ENCODE measurements at regions of chr7 and their contacts with region 1.

Region 1: GRCh38 chr7:14691597-14692203 is 210.9 kb downstream of the DGKB start:
- DNase-seq: peak; percentile 30
- ATAC-seq: peak; percentile 53; the same call in 1 of the 2 replicates
- H3K4me3 ChIP-seq: no peak overlapping the region
- H3K27ac ChIP-seq: no peak overlapping the region
- H3K4me1 ChIP-seq: no peaks in the 10 kb centered on the region
- H3K27me3 ChIP-seq: no peaks in the 10 kb centered on the region
- CTCF ChIP-seq: peak; percentile 75
- POLR2A ChIP-seq: no peak
- RAD21 ChIP-seq: peak; percentile 66

Region 2: DNA sequence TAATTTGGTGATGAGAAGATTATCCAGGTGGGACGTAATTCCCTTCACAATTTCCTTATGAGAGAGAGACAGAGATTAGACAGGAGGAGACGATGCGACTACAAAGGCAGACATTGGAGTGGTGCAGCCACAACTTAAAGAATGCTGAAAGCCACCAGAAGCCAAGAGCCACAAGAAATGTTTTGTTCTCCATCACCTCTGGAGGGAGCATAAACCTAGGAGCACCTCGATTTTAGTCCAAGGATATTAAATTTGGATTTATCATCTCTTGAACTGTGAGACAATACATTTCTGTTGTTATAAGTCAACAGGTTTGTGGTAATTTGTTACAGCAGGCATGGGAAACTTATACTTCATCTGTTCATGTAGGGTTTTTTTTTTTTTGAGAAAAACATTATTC is 208.0 kb before region 1 on chr7:
- CTCF ChIA-PET with region 1: no interaction called
- POLR2A ChIA-PET with region 1: no interaction called
- dilution Hi-C with region 1: no loop called
- in situ Hi-C with region 1: no loop called
- intact Hi-C with region 1: loop called (anchors 10 kb)
- DNase-seq: no peak
- ATAC-seq: no peak
- H3K4me3 ChIP-seq: no peak overlapping the region
- H3K27ac ChIP-seq: no peak overlapping the region
- H3K4me1 ChIP-seq: no peaks in the 10 kb centered on the region
- H3K27me3 ChIP-seq: no peaks in the 10 kb centered on the region
- CTCF ChIP-seq: no peak
- POLR2A ChIP-seq: no peak
- RAD21 ChIP-seq: no peak

Measured in IMR-90 (cell line).